PC-3 (cell line): ENCODE measurements at regions of chr6 and their contacts with region 1.

Region 1: GRCh38 chr6:131063028-131063763 is at the start of gene EPB41L2:
- DNase-seq: peak; percentile 89
- ATAC-seq: peak; percentile 70
- H3K4me3 ChIP-seq: peak within 1 kb of the TSS; percentile 87
- H3K27ac ChIP-seq: peak within 1 kb of the TSS; percentile 78
- H3K4me1 ChIP-seq: peaks cover 44% of the 10 kb centered on the region
- H3K27me3 ChIP-seq: no peaks in the 10 kb centered on the region
- CTCF ChIP-seq: no peak
- total RNA-seq, gene EPB41L2: 26.9 and 39.9 TPM in 2 replicates

Region 2: GRCh38 chr6:130885392-130886192 is 177.6 kb before region 1 on chr6:
- CTCF ChIA-PET with region 1: no interaction called
- POLR2A ChIA-PET with region 1: no interaction called
- intact Hi-C with region 1: loop called (anchors 1 kb)
- DNase-seq: peak; percentile 83
- ATAC-seq: peak; percentile 80
- H3K4me3 ChIP-seq: no peak overlapping the region
- H3K27ac ChIP-seq: no peak overlapping the region
- H3K4me1 ChIP-seq: 0 out of 2 replicates have a peak, but pooled peaks cover 4% of the 10 kb centered on the region
- H3K27me3 ChIP-seq: no peaks in the 10 kb centered on the region
- CTCF ChIP-seq: peak; percentile 82

Region 3: GRCh38 chr6:130933712-130934200 is 129.4 kb before region 1 on chr6:
- CTCF ChIA-PET with region 1: no interaction called
- POLR2A ChIA-PET with region 1: no interaction called
- intact Hi-C with region 1: loop called (anchors 1 kb)
- DNase-seq: peak; percentile 86
- ATAC-seq: peak; percentile 72
- H3K4me3 ChIP-seq: peak overlapping the region; percentile 32; the same call in 1 of the 2 replicates
- H3K27ac ChIP-seq: peak overlapping the region; percentile 66
- H3K4me1 ChIP-seq: peaks cover 75% of the 10 kb centered on the region
- H3K27me3 ChIP-seq: no peaks in the 10 kb centered on the region
- CTCF ChIP-seq: no peak

Region 4: GRCh38 chr6:131013495-131013894 is 49.7 kb before region 1 on chr6:
- CTCF ChIA-PET with region 1: no interaction called
- POLR2A ChIA-PET with region 1: no interaction called
- intact Hi-C with region 1: loop called (anchors 2 kb)
- DNase-seq: no peak
- ATAC-seq: no peak
- H3K4me3 ChIP-seq: no peak overlapping the region
- H3K27ac ChIP-seq: no peak overlapping the region
- H3K4me1 ChIP-seq: peaks cover 6% of the 10 kb centered on the region
- H3K27me3 ChIP-seq: no peaks in the 10 kb centered on the region
- CTCF ChIP-seq: no peak

Region 5: DNA sequence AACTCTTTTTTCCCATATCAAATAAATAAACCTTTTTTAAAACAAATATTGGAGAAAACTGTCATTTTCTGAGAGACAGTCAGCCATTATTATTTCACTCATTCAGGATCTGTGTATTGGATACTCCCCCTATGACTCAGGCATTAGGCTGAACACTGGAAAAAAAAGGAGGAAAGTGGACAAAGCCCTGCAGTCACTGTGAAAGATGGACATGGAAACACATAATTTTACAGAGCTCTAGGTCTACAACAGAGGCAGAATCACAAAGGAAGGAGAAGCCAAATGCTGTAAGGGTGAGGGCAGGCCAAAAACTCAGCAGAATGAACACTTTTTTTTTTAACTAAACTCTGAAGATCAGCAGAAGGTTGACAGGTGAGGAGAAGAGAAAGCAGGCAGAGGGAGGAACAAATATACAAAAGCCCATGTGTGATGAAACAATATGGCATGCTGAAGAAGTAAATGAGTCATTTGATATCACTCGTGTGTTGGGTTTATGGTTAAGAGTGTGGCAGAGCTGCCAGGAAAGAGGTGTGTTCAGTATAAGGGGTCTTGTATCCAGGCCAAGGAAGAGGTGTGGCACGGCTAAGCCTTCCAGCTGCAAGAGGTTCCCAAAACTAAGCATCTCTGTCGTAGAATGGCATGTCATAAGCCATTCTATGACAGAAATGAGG is 39.2 kb before region 1 on chr6:
- CTCF ChIA-PET with region 1: no interaction called
- POLR2A ChIA-PET with region 1: no interaction called
- intact Hi-C with region 1: loop called (anchors 2 kb)
- DNase-seq: peak; percentile 80
- ATAC-seq: peak; percentile 87
- H3K4me3 ChIP-seq: peak overlapping the region; percentile 43; the same call in 1 of the 2 replicates
- H3K27ac ChIP-seq: peak overlapping the region; percentile 72
- H3K4me1 ChIP-seq: peaks cover 18% of the 10 kb centered on the region
- H3K27me3 ChIP-seq: no peaks in the 10 kb centered on the region
- CTCF ChIP-seq: no peak

Region 6: DNA sequence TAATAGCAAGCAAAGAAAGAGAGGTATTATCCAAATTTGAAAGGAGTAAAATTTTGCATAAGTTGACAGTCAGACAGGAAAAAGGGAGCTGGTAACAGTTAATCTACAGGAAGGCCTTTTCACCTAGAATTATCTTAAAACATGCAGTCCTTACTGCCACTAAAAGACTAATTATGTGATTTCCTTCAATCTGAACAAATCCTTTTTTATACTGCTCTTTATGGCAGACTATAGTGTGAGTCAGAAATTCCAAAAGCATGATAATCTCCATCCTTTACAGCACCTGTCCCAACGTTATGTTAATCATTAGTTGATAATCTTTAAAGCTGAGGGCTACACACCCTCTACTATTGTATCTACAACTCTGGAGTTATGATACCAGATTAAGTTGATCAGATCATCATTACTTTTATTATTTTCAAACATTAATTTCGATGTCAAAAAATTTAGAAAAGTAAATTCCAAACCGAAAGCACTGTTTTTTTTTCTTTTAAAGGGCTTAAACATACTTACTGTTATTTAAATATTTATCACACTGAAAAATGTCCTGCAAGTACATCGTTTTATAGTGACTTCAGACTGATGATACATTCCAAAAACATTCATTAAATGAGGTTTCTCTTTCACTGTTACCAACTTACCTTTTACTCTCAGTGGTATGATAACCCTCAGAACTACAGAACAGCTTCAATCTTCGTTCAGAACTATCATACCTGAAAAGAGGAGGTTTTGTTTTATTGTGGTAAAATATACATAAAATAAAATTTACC is 38.9 kb after region 1 on chr6:
- CTCF ChIA-PET with region 1: no interaction called
- POLR2A ChIA-PET with region 1: no interaction called
- intact Hi-C with region 1: loop called (anchors 2 kb)
- DNase-seq: peak; percentile 70
- ATAC-seq: peak; percentile 88
- H3K4me3 ChIP-seq: peak overlapping the region; percentile 51
- H3K27ac ChIP-seq: no peak overlapping the region
- H3K4me1 ChIP-seq: peaks cover 18% of the 10 kb centered on the region
- H3K27me3 ChIP-seq: no peaks in the 10 kb centered on the region
- CTCF ChIP-seq: no peak

Region 7: DNA sequence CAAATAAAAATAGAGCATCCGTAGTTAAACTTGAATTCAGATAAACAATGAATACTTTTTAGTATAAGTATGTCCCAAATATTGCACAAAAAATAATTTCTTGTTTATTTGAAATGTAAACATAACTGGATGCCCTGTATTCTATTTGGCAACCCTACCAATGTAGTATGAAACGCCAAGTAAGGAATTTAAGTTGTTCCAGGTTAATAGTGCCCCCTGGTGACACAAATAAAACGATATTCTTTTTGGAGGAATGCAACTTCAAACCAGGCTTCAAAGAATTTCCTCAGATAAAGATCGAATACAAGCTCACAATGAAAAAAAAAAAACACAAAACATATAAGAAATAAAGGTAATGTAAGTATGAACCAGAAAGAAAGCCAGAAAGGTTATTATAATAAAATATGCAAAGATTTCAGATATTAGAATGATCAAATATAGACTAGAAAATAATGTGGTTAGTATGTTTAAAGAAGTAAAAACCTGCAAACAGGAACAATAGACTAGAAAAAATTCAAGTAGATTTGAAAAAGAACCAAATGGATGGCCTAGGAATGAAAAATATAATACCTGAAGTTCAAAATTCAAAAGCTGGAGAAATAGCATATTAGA is 53.7 kb after region 1 on chr6:
- CTCF ChIA-PET with region 1: no interaction called
- POLR2A ChIA-PET with region 1: interaction called, 4 read pairs
- intact Hi-C with region 1: loop called (anchors 1 kb)
- DNase-seq: peak; percentile 76
- ATAC-seq: peak; percentile 48; the same call in 1 of the 2 replicates
- H3K4me3 ChIP-seq: no peak overlapping the region
- H3K27ac ChIP-seq: no peak overlapping the region
- H3K4me1 ChIP-seq: no peaks in the 10 kb centered on the region
- H3K27me3 ChIP-seq: no peaks in the 10 kb centered on the region
- CTCF ChIP-seq: peak; percentile 67